ENCODE measurements at regions of chr1 and their contacts with region 1.

Region 1: GRCh38 chr1:175186433-175187142 is 6.0 kb downstream of the KIAA0040 start:
- DNase-seq: no peak
- ATAC-seq: no peak
- H3K4me3 Mint-ChIP-seq: no peak overlapping the region
- H3K27ac Mint-ChIP-seq: peak overlapping the region; percentile 68
- H3K4me1 Mint-ChIP-seq: peaks cover 98% of the 10 kb centered on the region
- H3K27me3 Mint-ChIP-seq: no peaks in the 10 kb centered on the region

Region 2: GRCh38 chr1:175208773-175209492 is 22.3 kb after region 1 on chr1:
- CTCF ChIA-PET with region 1: interaction called, 11 read pairs
- POLR2A ChIA-PET with region 1: interaction called, 4 read pairs
- intact Hi-C with region 1: no loop called
- DNase-seq: peak; percentile 58
- ATAC-seq: peak; percentile 60
- H3K4me3 Mint-ChIP-seq: peak overlapping the region; percentile 55
- H3K27ac Mint-ChIP-seq: peak overlapping the region; percentile 94
- H3K4me1 Mint-ChIP-seq: peaks cover 63% of the 10 kb centered on the region
- H3K27me3 Mint-ChIP-seq: no peaks in the 10 kb centered on the region